ENCODE measurements at regions of chr10 and their contacts with region 1.

Region 1: DNA sequence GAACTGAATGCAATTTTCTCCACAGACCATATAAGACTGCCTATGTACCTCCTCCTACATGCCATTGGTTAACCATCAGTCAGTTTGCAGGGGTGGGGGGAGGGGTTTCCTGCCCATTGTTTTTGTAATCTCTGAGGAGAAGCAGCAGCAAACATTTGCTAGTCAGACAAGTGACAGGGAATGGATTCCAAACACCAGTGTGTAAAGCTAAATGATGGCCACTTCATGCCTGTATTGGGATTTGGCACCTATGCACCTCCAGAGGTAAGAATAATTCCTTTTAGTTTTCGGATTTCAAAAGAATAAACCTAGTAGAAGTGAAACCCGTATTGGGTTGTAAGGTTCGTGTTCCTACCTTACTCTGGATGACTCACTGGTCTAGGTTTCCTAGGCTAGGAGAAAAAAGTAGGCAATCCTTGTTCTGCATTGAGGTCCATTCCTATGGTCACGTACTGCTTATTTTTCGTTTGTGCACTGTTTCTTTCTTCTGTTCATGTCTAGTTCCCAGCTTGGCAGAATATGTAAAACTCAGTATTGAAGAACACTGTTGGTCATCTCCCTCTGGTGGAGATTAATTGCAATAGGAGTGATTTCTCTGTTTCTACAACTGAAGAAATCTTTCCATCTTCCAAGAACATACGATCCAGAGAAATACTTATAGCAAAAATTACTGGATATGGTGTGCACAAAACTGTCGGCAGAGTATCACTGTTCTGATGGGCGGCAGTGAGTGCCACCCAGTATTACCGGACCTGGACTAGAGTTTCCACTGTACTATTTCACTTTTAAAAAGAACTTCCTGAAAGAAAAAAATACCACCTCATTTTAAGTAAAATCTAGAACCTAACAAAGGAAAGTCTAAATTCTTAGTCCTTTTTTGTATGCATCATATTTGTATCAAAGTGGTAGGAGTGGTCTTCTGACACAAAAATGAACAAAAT is at the start of gene AKR1C3:
- DNase-seq: no peak
- ATAC-seq: peak; percentile 88 to 89
- H3K4me3 ChIP-seq: peak within 1 kb of the TSS; percentile 99
- H3K27ac ChIP-seq: peak within 1 kb of the TSS; percentile 67
- H3K4me1 ChIP-seq: no peaks in the 10 kb centered on the region
- H3K27me3 ChIP-seq: no peaks in the 10 kb centered on the region
- total RNA-seq, gene AKR1C3: 28.1 to 60.8 (median 54.1) TPM

Region 2: DNA sequence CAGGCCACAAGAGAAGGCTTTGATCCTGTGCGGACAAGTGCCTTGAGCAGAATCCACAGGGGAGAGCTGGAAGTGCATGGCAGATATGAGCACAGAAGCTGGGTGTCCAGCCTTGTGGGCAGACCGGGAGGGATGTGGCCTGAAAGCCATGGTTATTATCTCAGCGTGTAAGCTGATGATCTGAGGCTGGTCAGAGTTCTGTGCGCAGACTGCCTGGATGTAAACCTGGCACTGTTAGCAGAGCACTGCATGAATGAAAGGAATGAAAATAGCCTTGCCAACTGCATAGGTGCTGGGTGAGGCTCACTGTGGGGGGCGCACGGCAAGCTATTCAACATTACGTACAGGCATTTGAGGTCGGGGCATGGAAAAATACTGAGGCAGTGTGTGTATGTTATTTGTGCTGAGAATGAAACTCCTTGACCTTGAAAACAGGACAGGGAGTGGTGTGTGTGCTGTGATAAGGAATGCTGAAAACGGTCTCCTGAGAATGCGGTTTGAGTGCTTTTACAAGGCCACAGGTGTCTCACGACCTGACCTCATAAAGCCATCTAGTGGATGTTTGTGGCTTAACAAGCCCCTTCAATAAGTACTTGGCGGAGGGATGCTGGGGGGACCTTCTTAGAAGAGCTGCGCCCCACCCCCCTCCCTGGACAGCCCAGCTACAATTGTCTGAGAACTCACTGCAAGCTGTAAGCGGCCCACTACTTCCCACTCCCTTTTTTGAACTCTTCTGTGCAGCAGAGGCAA is 112.6 kb before region 1 on chr10:
- intact Hi-C with region 1: loop called in 1 of 4 experiments (anchors 10 kb)
- DNase-seq: peak; percentile 23 to 64 (median 38)
- ATAC-seq: peak; percentile 66 to 69
- H3K4me3 ChIP-seq: no peak overlapping the region
- H3K27ac ChIP-seq: peak overlapping the region; percentile 74
- H3K4me1 ChIP-seq: peaks cover 6% of the 10 kb centered on the region
- H3K27me3 ChIP-seq: no peaks in the 10 kb centered on the region

Region 3: GRCh38 chr10:5014936-5015335 is 79.6 kb before region 1 on chr10:
- intact Hi-C with region 1: loop called in 1 of 4 experiments (anchors 10 kb)
- DNase-seq: no peak
- ATAC-seq: peak in 1 of 2 donors; percentile 50
- H3K4me3 ChIP-seq: no peak overlapping the region
- H3K27ac ChIP-seq: no peak overlapping the region
- H3K4me1 ChIP-seq: peaks cover 4% of the 10 kb centered on the region
- H3K27me3 ChIP-seq: no peaks in the 10 kb centered on the region

Region 4: DNA sequence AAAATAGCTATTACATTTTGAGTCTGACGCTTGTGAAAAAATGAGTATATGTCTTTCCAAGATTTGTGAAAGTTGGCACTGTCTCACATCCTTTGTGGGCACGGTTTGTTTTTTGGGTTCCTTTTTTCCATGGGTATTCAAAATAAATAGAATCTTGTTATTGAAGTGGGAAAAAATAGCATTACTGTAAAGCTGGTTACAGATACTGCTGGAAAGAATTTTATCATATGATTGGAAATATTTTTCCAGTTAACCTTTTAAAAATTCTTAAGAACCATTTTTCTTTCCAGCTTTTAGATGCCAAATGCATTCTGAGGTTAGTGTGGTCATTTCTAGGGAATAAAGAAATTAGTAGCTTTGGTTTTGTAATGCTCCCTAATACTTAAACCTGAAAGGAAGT is 329.2 kb after region 1 on chr10:
- intact Hi-C with region 1: no loop called
- DNase-seq: no peak
- ATAC-seq: no peak
- H3K4me3 ChIP-seq: no peak overlapping the region
- H3K27ac ChIP-seq: no peak overlapping the region
- H3K4me1 ChIP-seq: no peaks in the 10 kb centered on the region
- H3K27me3 ChIP-seq: no peaks in the 10 kb centered on the region